Left colon (tissue), 2 donors: ENCODE measurements at regions of chr14 and their contacts with region 1.

Region 1: GRCh38 chr14:50954811-50955372 is 10.6 kb upstream of the PYGL start:
- DNase-seq: no peak
- ATAC-seq: peak; percentile 80

Region 2: DNA sequence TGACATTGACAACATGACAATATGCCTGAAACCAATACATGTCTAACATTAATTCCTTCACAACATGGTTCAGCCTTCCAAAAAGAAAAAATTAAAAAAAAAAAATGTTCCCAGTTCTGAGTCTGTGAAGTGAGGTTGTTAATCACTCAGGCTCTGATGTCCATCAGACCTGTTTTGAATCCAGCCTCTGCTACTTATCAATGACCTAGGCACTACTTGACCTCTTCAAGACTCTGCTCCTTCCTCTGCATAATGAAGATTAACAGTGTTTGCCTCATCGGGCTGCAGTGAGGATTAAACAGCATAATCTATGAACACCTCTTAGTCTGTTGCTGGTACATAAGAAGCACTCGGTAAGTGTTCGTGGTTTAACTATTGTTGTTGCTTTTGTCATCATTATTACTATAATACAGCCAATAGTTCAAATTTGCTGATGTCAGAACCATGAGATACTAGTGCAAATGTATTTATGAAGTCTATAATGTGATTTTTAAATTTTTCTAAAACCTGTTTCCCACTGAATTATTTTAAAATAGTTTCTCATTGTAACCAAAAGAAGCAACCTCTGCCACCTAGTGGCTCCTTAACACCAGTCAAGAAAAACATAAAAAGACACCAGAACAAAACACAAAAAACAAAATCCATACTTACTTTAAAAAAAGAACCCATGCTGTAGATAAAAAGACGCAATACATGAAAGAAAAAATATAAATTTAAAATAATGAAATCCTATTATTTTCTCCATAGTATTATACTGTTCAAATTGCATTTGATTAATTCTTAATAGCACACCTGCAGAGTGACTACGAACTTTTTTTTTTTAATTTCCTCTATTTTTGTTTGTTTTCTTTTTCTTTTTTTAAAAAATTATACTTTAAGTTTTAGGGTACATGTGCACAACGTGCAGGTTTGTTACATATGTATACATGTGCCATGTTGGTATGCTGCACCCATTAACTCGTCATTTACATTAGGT is 264.9 kb after region 1 on chr14:
- intact Hi-C with region 1: loop called (anchors 5 to 10 kb)
- DNase-seq: no peak
- ATAC-seq: no peak